ENCODE measurements at regions of chr10 and their contacts with region 1.

Region 1: GRCh38 chr10:124916585-124917427 is 25.1 kb upstream of the ZRANB1 start:
- DNase-seq: peak; percentile 92 to 98 (median 97)
- ATAC-seq: peak; percentile 87
- H3K4me3 ChIP-seq: peak overlapping the region; percentile 82 to 92
- H3K4me3 Mint-ChIP-seq: peak overlapping the region; percentile 88
- H3K27ac ChIP-seq: peak overlapping the region; percentile 95 to 99
- H3K27ac Mint-ChIP-seq: peak overlapping the region; percentile 96
- H3K4me1 ChIP-seq: peaks cover 26% of the 10 kb centered on the region
- H3K4me1 Mint-ChIP-seq: peaks cover 40% of the 10 kb centered on the region
- H3K27me3 ChIP-seq: no peaks in the 10 kb centered on the region
- H3K27me3 Mint-ChIP-seq: peaks cover 2% of the 10 kb centered on the region
- CTCF ChIP-seq: no peak

Region 2: DNA sequence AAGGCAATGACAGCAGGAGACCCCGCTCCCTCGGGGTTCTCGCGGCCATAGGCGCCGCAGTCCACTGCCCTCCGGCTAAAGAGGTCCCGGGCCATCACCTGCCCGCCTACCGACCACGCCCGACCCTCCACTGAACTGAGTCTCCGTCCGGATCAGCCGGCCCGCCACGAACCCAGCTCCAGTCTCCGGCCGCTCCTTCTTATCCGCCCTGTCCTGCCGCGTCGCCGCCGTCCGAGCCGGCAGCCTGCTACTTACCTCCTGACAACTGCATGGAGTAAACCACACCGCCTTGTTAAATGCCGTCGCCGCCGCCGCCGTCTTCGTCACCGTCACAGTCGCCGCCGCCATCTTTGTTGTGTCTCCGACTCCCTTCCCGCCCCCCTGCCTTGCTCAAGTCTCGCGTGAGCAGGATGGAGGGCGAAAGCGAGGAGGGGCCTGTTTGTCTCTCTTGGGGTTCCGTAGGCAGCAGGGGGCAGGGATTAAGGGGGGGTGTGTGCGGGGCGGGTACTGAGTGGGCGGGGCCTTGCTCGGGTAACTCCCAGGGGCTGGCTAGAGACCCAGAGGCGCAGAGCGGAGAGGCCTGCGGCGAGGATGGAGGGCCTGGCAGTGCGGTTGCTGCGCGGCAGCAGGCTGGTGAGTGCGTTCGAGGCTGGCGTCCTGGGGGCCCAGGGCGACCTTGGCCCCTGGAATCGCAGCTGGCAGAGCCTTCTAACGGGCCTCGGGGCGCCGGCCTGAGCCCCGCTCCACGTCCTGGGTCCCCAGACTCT is 1908.2 kb before region 1 on chr10 and contains the starts of genes ACADSB and IKZF5:
- CTCF ChIA-PET with region 1: no interaction called
- POLR2A ChIA-PET with region 1: no interaction called
- intact Hi-C with region 1: loop called in 1 of 2 experiments (anchors 10 kb)
- DNase-seq: peak; percentile 92 to 99 (median 96)
- ATAC-seq: peak; percentile 89
- H3K4me3 ChIP-seq: peak within 1 kb of the TSS; percentile 89 to 100
- H3K4me3 Mint-ChIP-seq: peak within 1 kb of the TSS; percentile 97
- H3K27ac ChIP-seq: peak within 1 kb of the TSS; percentile 98 to 99
- H3K27ac Mint-ChIP-seq: peak within 1 kb of the TSS; percentile 99
- H3K4me1 ChIP-seq: peaks cover 48% of the 10 kb centered on the region
- H3K4me1 Mint-ChIP-seq: peaks cover 62% of the 10 kb centered on the region
- H3K27me3 ChIP-seq: no peaks in the 10 kb centered on the region
- H3K27me3 Mint-ChIP-seq: no peaks in the 10 kb centered on the region
- CTCF ChIP-seq: no peak
- total RNA-seq, gene ACADSB: 18.2 to 18.5 TPM
- total RNA-seq, gene IKZF5: 89.5 to 96.1 TPM

Region 3: DNA sequence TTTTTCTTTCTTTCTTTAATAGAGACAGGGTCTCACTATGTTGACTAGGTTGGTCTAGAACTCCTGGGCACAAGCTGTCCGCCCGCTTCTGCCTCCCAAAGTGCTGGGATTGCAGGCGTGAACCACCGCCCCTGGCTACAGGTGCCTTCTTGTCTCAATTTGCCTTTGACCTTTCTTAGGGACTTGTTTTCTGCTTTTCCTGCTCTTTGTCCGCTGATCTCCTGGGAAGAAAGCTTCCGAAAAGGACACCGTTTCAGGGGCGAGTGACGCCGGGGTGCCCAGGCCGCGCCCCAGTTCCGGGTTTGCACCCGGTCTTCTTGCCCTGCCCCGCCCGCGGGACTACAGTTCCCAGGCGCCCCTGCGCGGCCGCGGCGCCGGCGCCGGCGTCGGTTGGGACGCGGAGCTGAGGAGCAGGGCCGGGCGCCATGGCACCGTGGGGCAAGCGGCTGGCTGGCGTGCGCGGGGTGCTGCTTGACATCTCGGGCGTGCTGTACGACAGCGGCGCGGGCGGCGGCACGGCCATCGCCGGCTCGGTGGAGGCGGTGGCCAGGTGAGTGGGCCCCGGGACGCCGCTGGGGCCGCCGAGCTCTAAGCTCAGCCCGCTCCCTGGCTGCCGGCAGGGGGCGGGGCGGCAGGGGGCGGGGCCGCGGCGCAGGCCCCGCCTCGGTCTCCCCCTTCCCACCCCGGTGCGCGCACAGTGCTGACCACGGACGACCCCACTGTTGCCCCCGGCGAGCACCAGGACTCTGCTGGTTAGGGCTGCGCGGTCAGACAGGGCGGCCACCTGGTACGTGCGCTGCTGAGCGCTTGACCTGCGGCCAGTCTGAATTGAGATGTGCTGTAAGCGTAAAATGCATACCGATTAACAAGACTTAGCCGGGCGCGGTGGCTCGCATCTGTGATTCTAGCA is 455.1 kb before region 1 on chr10 and contains the start of gene LHPP:
- CTCF ChIA-PET with region 1: no interaction called
- POLR2A ChIA-PET with region 1: no interaction called
- intact Hi-C with region 1: loop called (anchors 2 kb)
- DNase-seq: peak; percentile 72 to 93 (median 86)
- ATAC-seq: peak; percentile 94
- H3K4me3 ChIP-seq: peak within 1 kb of the TSS; percentile 61 to 90
- H3K4me3 Mint-ChIP-seq: peak within 1 kb of the TSS; percentile 91
- H3K27ac ChIP-seq: peak within 1 kb of the TSS; percentile 37 to 79
- H3K27ac Mint-ChIP-seq: peak within 1 kb of the TSS; percentile 95
- H3K4me1 ChIP-seq: peaks cover 25% of the 10 kb centered on the region
- H3K4me1 Mint-ChIP-seq: peaks cover 32% of the 10 kb centered on the region
- H3K27me3 ChIP-seq: peaks cover 0 to under 1% of the 10 kb centered on the region in 2 experiments
- H3K27me3 Mint-ChIP-seq: peaks cover 4% of the 10 kb centered on the region
- CTCF ChIP-seq: peak; percentile 39
- total RNA-seq, gene LHPP: 14.4 to 17.3 TPM

Region 4: DNA sequence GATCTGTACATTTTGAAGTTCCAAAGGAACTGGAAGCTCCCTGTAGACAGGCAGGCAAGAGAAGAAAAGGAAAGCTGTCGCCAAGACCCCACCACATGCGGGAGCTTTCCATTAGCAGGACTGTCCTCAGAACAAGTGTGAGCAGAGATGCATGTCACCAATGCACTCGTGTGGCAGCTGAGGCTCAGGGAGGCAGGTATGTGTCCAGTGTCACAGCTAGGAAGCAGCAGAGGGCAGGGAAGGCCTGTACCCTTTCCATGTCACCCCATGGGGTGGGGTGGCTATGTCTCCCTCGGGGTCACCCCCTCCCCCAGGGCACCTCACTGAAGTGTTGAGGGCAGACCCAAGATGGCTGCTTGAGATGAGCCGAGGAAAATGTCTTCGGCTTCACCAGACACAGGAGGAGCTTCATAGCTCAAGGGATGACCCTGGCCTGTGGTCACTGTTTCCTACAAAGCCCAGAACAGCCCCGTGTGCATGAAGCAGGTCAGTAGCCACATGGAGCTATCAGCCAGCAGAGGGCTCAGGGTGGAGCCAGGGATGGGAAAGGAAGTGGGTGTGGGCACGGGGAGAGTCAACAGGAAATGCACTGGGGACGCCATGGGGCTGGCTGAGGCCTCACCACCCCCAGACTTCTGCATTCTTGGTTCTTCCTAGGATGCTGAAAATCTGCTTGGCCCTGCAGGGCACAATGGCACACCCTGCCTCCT is 269.2 kb before region 1 on chr10:
- CTCF ChIA-PET with region 1: no interaction called
- POLR2A ChIA-PET with region 1: interaction called, 3 read pairs
- intact Hi-C with region 1: loop called in 1 of 2 experiments (anchors 10 kb)
- DNase-seq: peak; percentile 44 to 90 (median 80)
- ATAC-seq: peak; percentile 54
- H3K4me3 ChIP-seq: peak overlapping the region; percentile 11 to 14
- H3K4me3 Mint-ChIP-seq: peak overlapping the region; percentile 74
- H3K27ac ChIP-seq: peak overlapping the region; percentile 65 to 93
- H3K27ac Mint-ChIP-seq: peak overlapping the region; percentile 94
- H3K4me1 ChIP-seq: peaks cover 84% of the 10 kb centered on the region
- H3K4me1 Mint-ChIP-seq: peaks cover 80% of the 10 kb centered on the region
- H3K27me3 ChIP-seq: no peaks in the 10 kb centered on the region
- H3K27me3 Mint-ChIP-seq: no peaks in the 10 kb centered on the region
- CTCF ChIP-seq: peak; percentile 30

Region 5: DNA sequence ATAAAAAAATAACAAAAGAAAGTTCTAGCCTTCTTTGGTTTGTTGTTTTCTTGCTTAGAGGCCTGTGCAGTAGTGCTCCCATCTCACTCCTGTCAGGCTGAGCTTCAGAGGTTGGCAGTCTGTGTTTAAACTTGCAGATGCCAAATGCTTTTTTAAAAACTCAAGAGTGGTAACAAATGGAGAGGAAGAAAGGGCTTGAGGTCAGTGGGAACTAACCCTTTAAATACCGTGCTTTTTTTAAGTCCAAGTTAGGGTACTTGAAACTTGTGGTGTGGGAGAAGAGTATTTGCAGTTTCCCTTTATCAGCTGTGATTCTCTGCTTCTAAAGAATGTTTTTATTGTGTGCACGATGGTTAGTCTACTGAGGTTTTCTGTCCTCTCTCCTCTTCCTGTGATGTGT is 54.5 kb after region 1 on chr10:
- CTCF ChIA-PET with region 1: no interaction called
- POLR2A ChIA-PET with region 1: interaction called, 3 read pairs
- intact Hi-C with region 1: loop called (anchors 5 kb)
- DNase-seq: no peak
- ATAC-seq: no peak
- H3K4me3 ChIP-seq: no peak overlapping the region
- H3K4me3 Mint-ChIP-seq: no peak overlapping the region
- H3K27ac ChIP-seq: no peak overlapping the region
- H3K27ac Mint-ChIP-seq: peak overlapping the region; percentile 21
- H3K4me1 ChIP-seq: peaks cover 12% of the 10 kb centered on the region
- H3K4me1 Mint-ChIP-seq: peaks cover 43% of the 10 kb centered on the region
- H3K27me3 ChIP-seq: no peaks in the 10 kb centered on the region
- H3K27me3 Mint-ChIP-seq: no peaks in the 10 kb centered on the region
- CTCF ChIP-seq: no peak

Region 6: GRCh38 chr10:125822878-125823662 is 906.3 kb after region 1 on chr10 and contains the starts of genes BCCIP and UROS:
- CTCF ChIA-PET with region 1: no interaction called
- POLR2A ChIA-PET with region 1: interaction called, 3 read pairs
- intact Hi-C with region 1: loop called in 1 of 2 experiments (anchors 5 kb)
- DNase-seq: peak; percentile 80 to 96 (median 90)
- ATAC-seq: peak; percentile 87
- H3K4me3 ChIP-seq: peak within 1 kb of the TSS; percentile 79 to 92
- H3K4me3 Mint-ChIP-seq: no peak within 1 kb of the TSS
- H3K27ac ChIP-seq: peak within 1 kb of the TSS; percentile 90 to 96
- H3K27ac Mint-ChIP-seq: peak within 1 kb of the TSS; percentile 68
- H3K4me1 ChIP-seq: peaks cover 42% of the 10 kb centered on the region
- H3K4me1 Mint-ChIP-seq: peaks cover 39% of the 10 kb centered on the region
- H3K27me3 ChIP-seq: no peaks in the 10 kb centered on the region
- H3K27me3 Mint-ChIP-seq: no peaks in the 10 kb centered on the region
- CTCF ChIP-seq: no peak
- total RNA-seq, gene BCCIP: 41.3 to 42.0 TPM
- total RNA-seq, gene UROS: 17.7 to 20.7 TPM

Measured in CD8-positive, alpha-beta T cell (primary cell).